ENCODE measurements at regions of chr13 and their contacts with region 1.

Region 1: DNA sequence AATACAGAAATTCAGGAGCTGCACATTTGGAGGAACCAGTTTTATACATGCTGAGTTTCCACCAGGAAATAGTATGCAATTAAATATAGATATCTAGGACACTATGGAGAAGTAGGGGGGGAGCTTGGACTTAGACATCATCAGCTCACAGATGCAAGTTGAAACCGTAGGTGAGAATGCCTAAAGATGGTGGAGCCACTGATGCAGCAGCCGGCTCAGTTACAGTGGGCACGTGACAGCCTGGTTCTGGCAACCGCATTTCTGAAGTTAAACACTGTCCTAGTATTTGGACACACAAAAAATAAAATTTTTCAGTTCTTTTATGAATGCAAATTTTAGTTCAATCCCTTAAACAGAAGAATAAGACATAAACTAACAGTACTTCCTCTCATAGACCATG is 91.5 kb upstream of the FRY start:
- DNase-seq: no peak
- H3K4me3 ChIP-seq: no peak overlapping the region
- H3K27ac ChIP-seq: no peak overlapping the region
- H3K4me1 ChIP-seq: peaks cover 6% of the 10 kb centered on the region
- H3K27me3 ChIP-seq: no peaks in the 10 kb centered on the region
- CTCF ChIP-seq: no peak

Region 2: GRCh38 chr13:31956980-31957644 is 17.0 kb after region 1 on chr13:
- CTCF ChIA-PET with region 1: interaction called, 13 read pairs
- dilution Hi-C with region 1: no loop called
- in situ Hi-C with region 1: no loop called
- intact Hi-C with region 1: no loop called
- DNase-seq: no peak
- H3K4me3 ChIP-seq: no peak overlapping the region
- H3K27ac ChIP-seq: no peak overlapping the region
- H3K4me1 ChIP-seq: no peaks in the 10 kb centered on the region
- H3K27me3 ChIP-seq: no peaks in the 10 kb centered on the region
- CTCF ChIP-seq: no peak

Region 3: DNA sequence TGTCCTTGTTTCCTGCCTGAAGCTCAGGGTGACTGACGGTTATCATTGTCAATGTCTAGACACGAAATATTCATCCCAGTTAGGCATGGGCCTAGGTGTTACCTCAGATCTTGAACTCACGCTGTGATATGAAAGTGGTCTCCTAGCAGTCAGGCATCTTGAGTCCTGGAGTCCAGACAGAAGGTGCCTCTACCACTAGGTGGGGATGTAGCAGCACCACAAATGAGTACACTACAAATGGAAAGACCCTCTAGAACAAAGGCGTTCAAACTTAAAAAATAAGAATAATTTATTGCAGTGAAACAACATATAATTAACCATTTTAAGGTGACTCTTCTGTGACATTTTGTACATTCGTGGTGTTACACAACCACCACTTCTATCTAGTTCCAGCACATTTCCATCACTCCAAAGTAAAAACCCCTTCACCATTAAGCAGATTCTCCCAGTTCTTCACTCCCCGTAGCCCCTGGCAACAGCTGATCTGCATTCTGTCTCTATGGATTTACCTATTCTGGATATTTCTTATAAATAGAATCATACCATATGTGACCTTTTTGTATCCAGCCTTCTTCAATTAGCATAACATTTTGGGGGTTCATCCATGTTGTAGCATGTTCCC is 79.6 kb after region 1 on chr13:
- CTCF ChIA-PET with region 1: no interaction called
- dilution Hi-C with region 1: no loop called
- in situ Hi-C with region 1: no loop called
- intact Hi-C with region 1: no loop called
- DNase-seq: peak; percentile 30
- H3K4me3 ChIP-seq: no peak overlapping the region
- H3K27ac ChIP-seq: no peak overlapping the region
- H3K4me1 ChIP-seq: no peaks in the 10 kb centered on the region
- H3K27me3 ChIP-seq: no peaks in the 10 kb centered on the region
- CTCF ChIP-seq: peak; percentile 47 to 79